BJ (cell line): ENCODE measurements at regions of chr12 and their contacts with region 1.

Region 1: DNA sequence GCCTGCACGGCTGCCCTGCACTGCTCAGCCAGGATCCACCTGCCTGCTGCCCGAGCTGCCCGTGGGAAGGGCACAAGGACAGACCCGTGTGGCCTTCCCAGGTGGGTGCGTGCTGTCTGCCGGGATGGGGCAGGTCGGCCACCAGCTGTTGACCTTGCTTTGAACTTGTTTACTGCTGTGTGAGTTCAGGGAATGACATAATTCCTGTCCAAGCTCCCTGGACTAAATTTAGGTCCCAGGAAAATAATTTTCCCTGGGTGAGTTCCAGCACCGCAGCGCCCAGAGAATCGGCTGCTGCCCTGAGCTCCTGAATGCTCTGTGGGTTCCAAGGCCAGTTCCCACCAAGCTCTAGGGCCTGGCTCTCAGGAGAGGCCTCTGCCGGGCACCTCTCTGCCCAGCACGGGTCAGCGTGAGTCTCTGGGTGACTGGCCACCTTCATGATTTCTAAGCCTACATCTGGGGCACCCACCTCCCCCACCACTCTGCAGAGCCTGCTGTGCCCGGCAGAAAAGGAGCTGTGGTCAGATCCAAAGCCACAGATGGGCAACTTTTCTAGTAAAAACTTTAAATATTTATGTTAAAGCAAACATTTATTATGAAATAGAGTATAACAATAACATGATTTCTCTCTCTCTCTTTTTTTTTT is 27.2 kb upstream of the MLXIP start:
- DNase-seq: no peak
- H3K4me3 ChIP-seq: no peak overlapping the region
- H3K27me3 ChIP-seq: no peaks in the 10 kb centered on the region
- CTCF ChIP-seq: no peak

Region 2: DNA sequence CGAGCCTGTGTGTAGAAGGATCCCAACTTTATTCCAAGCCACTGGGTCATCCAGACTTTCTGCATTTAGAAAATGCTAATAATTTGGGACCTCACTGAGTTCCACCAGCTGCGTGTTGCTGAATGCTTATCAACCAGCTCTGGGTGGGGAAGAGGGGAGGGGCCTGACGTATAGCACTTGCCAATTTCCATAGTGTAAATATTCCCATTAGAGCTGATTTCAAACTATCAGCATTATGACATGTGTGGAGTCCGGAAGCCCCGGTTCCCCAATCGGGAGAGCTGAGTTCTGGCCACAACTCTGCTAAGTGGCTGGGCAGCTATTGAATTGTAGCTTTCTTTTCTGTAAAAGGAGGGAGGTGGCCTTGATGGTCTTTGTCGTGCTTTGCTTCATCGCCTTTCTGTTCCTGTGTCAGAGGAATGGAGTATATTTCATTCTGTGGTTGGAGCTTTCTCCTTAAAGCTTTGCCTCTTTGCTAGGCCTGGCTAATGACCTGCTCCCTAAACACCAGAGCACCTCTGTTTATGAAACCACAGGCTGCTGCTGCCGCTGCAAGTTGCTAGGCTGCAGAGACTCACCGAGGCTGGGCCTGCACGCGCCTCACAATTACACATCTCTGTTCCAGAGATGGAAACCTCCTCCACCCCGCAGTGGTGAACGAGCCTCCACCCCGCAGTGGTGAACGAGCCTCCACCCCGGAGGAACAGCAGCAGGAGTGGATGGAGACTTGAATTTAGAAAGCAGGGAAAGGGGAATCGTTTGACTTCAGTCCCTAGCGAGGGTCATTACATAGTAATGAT is 37.4 kb before region 1 on chr12:
- CTCF ChIA-PET with region 1: no interaction called
- POLR2A ChIA-PET with region 1: no interaction called
- DNase-seq: no peak
- H3K4me3 ChIP-seq: no peak overlapping the region
- H3K27me3 ChIP-seq: no peaks in the 10 kb centered on the region
- CTCF ChIP-seq: no peak

Region 3: DNA sequence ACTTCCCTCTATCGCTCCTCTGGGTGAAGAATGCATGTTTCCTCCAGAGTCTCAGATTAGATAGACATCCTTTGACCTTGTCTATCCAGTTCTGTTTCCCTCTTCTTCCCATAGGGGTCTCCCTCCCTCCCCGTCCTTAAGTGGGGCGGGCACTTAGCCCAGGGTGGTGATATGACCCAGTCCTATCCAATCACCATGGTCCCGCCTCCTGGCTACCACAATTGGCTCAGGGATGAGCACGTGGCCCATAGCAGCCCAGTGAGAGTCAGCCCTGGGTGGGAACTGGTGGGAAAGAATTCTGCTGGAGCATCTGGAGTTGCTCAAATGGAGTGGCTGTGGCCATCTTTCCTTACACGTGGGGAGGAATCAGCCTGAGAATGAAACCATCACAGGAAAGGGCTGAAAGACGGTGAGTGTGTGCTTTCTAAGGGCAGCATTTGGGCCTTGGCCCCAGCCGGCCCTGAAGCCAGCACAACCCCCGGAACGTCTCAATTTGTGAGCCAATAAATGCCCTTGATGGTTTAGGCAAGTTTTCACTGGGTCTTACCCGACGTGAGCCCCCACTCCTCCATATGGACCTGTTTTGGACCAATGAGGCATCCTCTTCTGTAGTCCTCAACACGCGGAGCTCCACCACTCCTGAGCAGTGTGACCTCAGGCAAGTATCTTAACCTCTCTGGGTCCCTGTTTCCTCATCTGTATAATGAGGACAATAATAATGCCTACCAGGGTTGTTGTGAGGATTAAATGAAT is 12.8 kb after region 1 on chr12:
- CTCF ChIA-PET with region 1: interaction called, 35 read pairs
- POLR2A ChIA-PET with region 1: no interaction called
- DNase-seq: peak; percentile 73
- H3K4me3 ChIP-seq: 0 out of 2 replicates have a peak overlapping the region, but pooled peaks have one; percentile 1
- H3K27me3 ChIP-seq: no peaks in the 10 kb centered on the region
- CTCF ChIP-seq: peak; percentile 61

Region 4: GRCh38 chr12:122107261-122107660 is 55.9 kb after region 1 on chr12:
- CTCF ChIA-PET with region 1: interaction called, 19 read pairs
- POLR2A ChIA-PET with region 1: no interaction called
- DNase-seq: no peak
- H3K4me3 ChIP-seq: no peak overlapping the region
- H3K27me3 ChIP-seq: no peaks in the 10 kb centered on the region
- CTCF ChIP-seq: no peak

Region 5: GRCh38 chr12:122147514-122148290 is 96.3 kb after region 1 on chr12:
- CTCF ChIA-PET with region 1: interaction called, 16 read pairs
- POLR2A ChIA-PET with region 1: no interaction called
- DNase-seq: no peak
- H3K4me3 ChIP-seq: no peak overlapping the region
- H3K27me3 ChIP-seq: no peaks in the 10 kb centered on the region
- CTCF ChIP-seq: no peak

Region 6: GRCh38 chr12:122336015-122336946 is 284.9 kb after region 1 on chr12:
- CTCF ChIA-PET with region 1: no interaction called
- POLR2A ChIA-PET with region 1: no interaction called
- DNase-seq: no peak
- H3K4me3 ChIP-seq: no peak overlapping the region
- H3K27me3 ChIP-seq: no peaks in the 10 kb centered on the region
- CTCF ChIP-seq: peak; percentile 79